Cardiac septum (tissue), 1 donor: ENCODE measurements at regions of chr22 and their contacts with region 1.

Region 1: GRCh38 chr22:45553351-45554039 is 50.8 kb downstream of the FBLN1 start:
- DNase-seq: no peak

Region 2: GRCh38 chr22:45441138-45441537 is 112.4 kb before region 1 on chr22:
- intact Hi-C with region 1: loop called (anchors 2 kb)
- DNase-seq: no peak

Region 3: GRCh38 chr22:45511847-45512281 is 41.6 kb before region 1 on chr22:
- intact Hi-C with region 1: loop called (anchors 5 kb)
- DNase-seq: peak; percentile 83

Region 4: DNA sequence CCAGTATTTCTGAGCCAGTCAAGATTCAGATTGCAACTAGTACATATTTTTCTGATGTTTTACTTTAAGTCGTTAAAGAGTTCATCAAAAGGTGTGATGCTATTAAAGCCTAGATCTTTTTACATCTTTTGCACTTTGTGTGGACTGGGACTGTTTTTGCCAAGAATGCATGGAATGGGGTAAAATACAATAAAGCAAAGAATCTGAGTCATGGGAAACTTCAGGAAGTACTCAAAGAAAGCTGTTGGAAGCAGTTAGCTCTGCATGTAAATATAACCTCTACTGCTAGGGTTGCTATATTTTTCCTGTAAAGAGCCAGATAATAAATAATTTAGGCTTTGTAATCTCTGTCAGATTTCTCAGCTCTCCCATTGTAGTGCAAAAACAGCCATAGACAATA is 139.1 kb after region 1 on chr22:
- intact Hi-C with region 1: no loop called
- DNase-seq: no peak